Aorta (tissue), 5 donors: ENCODE measurements at regions of chr3 and their contacts with region 1.

Region 1: GRCh38 chr3:177359593-177360357 is 162.5 kb upstream of the TBL1XR1 start:
- DNase-seq: peak; percentile 96 to 98
- ATAC-seq: peak; percentile 92
- H3K4me3 ChIP-seq: no peak overlapping the region
- H3K27ac ChIP-seq: peak overlapping the region; percentile 9 to 66
- H3K4me1 ChIP-seq: peaks cover 0 to 4% of the 10 kb centered on the region in 2 donors
- H3K27me3 ChIP-seq: no peaks in the 10 kb centered on the region

Region 2: DNA sequence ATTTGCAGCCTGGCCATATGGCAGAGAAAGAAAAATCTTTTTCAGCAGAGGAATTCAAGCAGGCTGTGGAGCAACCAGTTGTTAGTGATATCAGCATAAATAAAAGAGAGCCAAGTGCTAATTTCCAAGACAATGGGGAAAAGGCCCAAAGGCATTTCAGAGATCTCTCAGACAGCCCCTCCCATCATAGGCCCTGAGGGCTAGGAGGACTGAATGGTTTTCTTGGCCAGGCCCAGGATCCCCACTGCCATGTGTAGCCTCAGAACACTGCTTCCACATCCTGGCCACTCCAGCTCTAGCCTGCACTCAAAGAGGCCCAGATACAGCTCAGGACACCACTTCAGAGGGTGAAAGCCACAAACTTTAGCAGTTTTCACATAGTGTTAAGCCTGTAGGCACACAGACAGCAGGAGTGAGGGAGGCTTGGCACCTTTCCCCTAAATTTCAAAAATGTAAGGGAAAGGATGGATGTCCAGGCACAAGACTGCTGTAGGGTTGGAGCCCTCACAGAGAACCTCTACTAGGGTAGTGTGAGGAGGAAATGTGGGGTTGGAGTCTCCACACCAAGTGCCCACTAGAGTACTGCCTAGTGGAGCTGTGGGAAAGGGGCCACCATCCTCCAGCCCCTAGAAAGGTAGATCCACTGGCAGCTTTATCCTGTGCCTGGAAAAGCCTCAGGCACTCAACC is 353.9 kb before region 1 on chr3:
- intact Hi-C with region 1: no loop called
- DNase-seq: no peak
- ATAC-seq: no peak
- H3K4me3 ChIP-seq: no peak overlapping the region
- H3K27ac ChIP-seq: no peak overlapping the region
- H3K4me1 ChIP-seq: no peaks in the 10 kb centered on the region
- H3K27me3 ChIP-seq: no peaks in the 10 kb centered on the region

Region 3: DNA sequence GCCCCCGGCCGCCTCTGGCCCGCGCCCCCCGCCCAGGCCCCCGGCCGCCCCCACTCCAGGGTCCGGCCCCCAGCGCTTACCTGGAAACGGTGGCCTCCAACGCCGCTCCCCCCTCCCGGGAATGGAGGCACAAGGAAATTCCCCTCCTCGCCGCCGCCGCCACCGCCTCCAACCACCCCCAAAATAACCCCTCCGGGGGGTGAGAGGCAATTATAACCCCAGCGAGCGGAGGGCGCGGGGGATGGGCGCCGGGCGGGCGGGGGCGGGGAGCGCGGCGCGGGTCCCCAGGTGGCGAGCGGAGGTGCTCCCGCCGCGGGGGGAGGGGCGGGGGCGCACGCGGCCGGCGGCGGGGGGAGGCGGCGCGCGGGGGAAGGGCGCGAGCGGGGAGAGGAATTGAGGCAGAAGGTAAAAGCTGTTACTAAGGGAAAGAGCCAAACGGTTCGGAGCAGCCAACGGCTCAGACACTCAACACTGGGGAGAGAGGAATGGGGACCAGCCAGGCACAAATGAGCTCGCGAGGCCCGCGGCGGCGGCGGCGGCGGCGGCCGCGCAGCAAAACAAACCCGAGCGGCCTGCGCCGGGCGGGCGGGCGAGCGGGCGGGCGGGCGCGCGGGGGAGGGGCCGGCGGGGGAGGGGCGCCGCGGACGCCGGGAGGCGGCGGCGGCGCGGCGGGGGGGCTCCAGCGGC is 162.6 kb before region 1 on chr3 and contains the start of gene TBL1XR1:
- intact Hi-C with region 1: loop called (anchors 1 to 2 kb)
- DNase-seq: peak; percentile 95 to 96
- ATAC-seq: peak; percentile 90
- H3K4me3 ChIP-seq: peak within 1 kb of the TSS; percentile 99 to 100
- H3K27ac ChIP-seq: peak within 1 kb of the TSS; percentile 87 to 94
- H3K4me1 ChIP-seq: peaks cover 0 to 3% of the 10 kb centered on the region in 2 donors
- H3K27me3 ChIP-seq: no peaks in the 10 kb centered on the region
- total RNA-seq, gene TBL1XR1: 129 to 200 TPM

Region 4: GRCh38 chr3:177410730-177411129 is 51.0 kb after region 1 on chr3:
- intact Hi-C with region 1: no loop called
- DNase-seq: no peak
- ATAC-seq: no peak
- H3K4me3 ChIP-seq: no peak overlapping the region
- H3K27ac ChIP-seq: no peak overlapping the region
- H3K4me1 ChIP-seq: no peaks in the 10 kb centered on the region
- H3K27me3 ChIP-seq: peaks cover 0 to 1% of the 10 kb centered on the region in 2 donors

Region 5: GRCh38 chr3:177802151-177802900 is 442.6 kb after region 1 on chr3:
- intact Hi-C with region 1: loop called in 1 of 2 experiments (anchors 10 kb)
- DNase-seq: no peak
- ATAC-seq: no peak
- H3K4me3 ChIP-seq: no peak overlapping the region
- H3K27ac ChIP-seq: no peak overlapping the region
- H3K4me1 ChIP-seq: peaks cover 1 to 13% of the 10 kb centered on the region in 2 donors
- H3K27me3 ChIP-seq: no peaks in the 10 kb centered on the region

Region 6: GRCh38 chr3:178325330-178325729 is 965.6 kb after region 1 on chr3:
- intact Hi-C with region 1: loop called (anchors 5 to 10 kb)
- DNase-seq: no peak
- ATAC-seq: no peak
- H3K4me3 ChIP-seq: no peak overlapping the region
- H3K27ac ChIP-seq: no peak overlapping the region
- H3K4me1 ChIP-seq: peaks cover 0 to 7% of the 10 kb centered on the region in 2 donors
- H3K27me3 ChIP-seq: no peaks in the 10 kb centered on the region